Posterior vena cava (tissue), 2 donors: ENCODE measurements at regions of chr22 and their contacts with region 1.

Region 1: GRCh38 chr22:49936018-49936952 is 17.9 kb downstream of the CRELD2 start:
- DNase-seq: peak; percentile 98

Region 2: DNA sequence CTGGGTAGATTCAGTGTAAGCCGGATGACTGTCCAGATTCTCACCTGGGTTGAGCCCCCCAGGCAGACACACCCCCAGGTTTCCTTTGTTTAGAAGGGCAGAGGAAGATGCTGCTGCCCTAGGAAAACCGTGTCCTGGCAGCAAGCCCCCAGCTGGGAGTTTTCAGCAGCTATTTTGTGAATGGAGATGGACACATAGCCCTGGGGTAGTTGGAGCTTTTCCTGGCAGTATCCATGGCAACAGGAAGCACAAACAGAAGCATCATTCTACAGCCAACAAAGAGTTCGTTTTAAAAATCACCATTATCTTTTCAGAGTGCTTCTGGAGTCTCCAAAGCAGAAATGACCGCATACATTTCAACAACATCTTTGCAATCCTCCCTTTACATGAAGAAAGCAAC is 354.1 kb before region 1 on chr22:
- intact Hi-C with region 1: no loop called
- DNase-seq: no peak

Region 3: DNA sequence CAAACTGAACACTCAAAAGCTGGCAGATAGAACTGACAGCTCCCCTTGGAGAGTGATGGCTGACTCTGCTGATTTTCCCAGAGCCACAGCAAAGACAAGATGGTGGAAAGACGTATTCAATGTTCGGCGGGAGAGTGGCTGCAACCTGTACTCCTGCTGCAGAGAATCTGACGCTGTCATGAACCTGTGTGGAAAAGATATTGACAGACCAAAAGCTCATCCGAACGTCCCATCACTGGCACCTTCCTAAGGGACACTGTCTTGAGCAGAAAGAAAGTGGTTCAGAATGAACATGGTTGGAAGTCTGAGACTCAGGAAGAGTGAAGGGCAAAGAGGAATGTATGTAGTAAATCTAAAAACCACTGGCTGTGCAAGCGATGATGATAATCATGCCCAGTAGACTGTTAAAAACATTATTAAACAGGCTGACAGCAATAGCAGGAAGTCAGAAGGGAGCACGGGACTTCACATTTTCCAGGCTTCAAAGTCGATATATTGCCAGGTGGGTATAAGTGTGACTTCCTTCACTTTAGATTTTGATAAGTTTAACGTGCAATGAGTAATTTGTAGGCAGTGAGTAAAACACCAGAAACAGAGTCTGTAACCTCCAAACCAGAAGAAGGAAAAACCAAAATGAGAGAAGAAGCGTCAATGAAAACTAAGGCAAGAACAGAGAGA is 82.5 kb after region 1 on chr22:
- intact Hi-C with region 1: loop called (anchors 2 to 5 kb)
- DNase-seq: no peak

Region 4: DNA sequence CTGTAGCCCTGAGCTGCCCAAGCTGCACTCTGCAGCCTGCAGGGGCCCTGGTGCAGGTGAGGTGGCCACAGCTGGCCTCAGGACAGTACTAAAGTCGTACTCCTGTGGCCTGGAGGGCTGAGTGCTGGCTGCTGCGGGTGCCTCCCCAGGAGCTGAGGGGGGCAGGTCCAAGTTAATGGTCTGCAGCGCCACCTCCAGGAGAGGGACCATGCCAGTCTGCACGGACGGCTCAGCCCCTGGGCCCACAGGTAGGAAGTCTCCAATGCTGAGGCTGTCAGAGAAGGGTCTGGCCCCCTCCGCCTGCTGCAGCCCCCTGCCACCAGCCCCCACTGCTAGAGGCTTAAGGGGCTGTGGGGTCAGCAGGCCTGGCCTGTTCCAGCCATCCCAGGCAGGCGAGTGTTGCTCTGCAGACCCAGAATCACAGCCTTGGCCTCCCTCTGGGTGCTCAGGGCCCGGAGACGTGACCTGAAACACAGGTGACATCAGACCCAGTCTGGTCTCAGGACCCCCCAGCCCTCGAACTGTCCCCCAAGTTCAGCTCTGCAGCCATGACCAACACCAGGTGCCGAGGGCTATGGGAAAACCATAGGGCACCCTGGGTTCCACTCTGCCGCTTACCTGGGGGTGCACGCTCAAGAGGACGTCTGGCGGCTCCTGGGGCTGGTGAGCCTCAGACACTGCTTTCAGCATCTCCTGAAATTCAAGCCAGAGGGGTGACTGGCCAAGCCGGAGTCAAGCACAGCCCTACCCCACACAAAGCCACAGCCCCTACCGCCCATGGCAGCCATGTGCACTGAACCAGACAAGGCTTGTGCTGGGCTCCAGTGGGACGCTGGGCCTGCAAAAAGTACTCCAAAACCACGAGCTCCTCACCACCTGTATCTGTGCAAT is 285.4 kb after region 1 on chr22:
- intact Hi-C with region 1: loop called in 1 of 2 experiments (anchors 10 kb)
- DNase-seq: peak; percentile 71